Activated naive CD4-positive, alpha-beta T cell treated with anti-CD3 and anti-CD28 coated beads, Interleukin-2, amount 10 ng/mL, durations not matched to agents 7 days and 5 days (primary cell): ENCODE measurements at regions of chr1 and their contacts with region 1.

Region 1: DNA sequence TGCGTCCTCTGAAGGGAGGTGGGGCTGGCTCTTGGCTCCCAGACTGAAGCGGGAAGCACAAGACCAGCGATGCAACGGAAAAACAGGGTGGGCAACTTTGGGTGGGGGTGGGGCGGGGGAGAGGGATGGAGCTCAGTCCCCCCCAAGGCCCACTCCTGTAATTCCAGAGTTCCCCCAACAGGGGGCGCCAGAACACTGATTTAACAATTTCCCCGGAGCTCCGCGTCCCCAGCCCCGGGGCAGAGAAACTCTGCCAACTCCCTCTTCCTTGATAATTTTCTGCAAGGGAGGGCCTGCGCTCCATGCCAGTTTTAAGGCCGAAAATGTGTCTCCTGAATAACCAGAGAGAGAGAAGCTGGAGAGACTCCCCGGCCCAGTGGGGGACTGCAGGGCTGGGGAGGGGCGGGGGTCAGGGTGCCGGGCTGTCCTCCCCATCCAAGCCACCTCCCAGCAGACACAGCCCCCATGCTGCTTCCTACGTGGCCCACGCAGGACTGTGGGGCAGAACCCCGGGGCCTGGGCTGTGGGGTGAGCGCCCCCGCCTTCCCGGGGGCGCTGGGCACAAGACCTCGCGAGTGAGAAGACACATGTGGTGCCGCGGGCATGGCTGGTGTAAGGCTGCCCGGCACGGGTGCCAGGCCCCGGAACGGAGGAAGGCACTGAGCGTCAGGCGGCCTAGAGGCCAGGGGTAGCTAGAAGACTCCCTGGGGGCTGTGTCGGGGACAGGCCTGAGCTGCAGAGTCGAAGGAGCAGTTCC is 51.4 kb downstream of the KIF21B start:
- DNase-seq: peak; percentile 70
- H3K4me3 Mint-ChIP-seq: no peak overlapping the region
- H3K27ac Mint-ChIP-seq: no peak overlapping the region
- H3K4me1 Mint-ChIP-seq: no peaks in the 10 kb centered on the region
- H3K27me3 Mint-ChIP-seq: no peaks in the 10 kb centered on the region

Region 2: GRCh38 chr1:200767321-200767720 is 204.8 kb before region 1 on chr1:
- CTCF ChIA-PET with region 1: no interaction called
- DNase-seq: no peak
- H3K4me3 Mint-ChIP-seq: no peak overlapping the region
- H3K27ac Mint-ChIP-seq: no peak overlapping the region
- H3K4me1 Mint-ChIP-seq: no peaks in the 10 kb centered on the region
- H3K27me3 Mint-ChIP-seq: no peaks in the 10 kb centered on the region

Region 3: GRCh38 chr1:200992382-200993048 is 20.4 kb after region 1 on chr1:
- CTCF ChIA-PET with region 1: interaction called, 14 read pairs
- DNase-seq: no peak
- H3K4me3 Mint-ChIP-seq: no peak overlapping the region
- H3K27ac Mint-ChIP-seq: no peak overlapping the region
- H3K4me1 Mint-ChIP-seq: no peaks in the 10 kb centered on the region
- H3K27me3 Mint-ChIP-seq: no peaks in the 10 kb centered on the region

Region 4: GRCh38 chr1:201023517-201023902 is 51.4 kb after region 1 on chr1 and contains the start of gene KIF21B:
- CTCF ChIA-PET with region 1: interaction called, 21 read pairs
- DNase-seq: peak; percentile 94
- H3K4me3 Mint-ChIP-seq: peak within 1 kb of the TSS; percentile 89
- H3K27ac Mint-ChIP-seq: peak within 1 kb of the TSS; percentile 100
- H3K4me1 Mint-ChIP-seq: peaks cover 75% of the 10 kb centered on the region
- H3K27me3 Mint-ChIP-seq: peaks cover 3% of the 10 kb centered on the region

Region 5: DNA sequence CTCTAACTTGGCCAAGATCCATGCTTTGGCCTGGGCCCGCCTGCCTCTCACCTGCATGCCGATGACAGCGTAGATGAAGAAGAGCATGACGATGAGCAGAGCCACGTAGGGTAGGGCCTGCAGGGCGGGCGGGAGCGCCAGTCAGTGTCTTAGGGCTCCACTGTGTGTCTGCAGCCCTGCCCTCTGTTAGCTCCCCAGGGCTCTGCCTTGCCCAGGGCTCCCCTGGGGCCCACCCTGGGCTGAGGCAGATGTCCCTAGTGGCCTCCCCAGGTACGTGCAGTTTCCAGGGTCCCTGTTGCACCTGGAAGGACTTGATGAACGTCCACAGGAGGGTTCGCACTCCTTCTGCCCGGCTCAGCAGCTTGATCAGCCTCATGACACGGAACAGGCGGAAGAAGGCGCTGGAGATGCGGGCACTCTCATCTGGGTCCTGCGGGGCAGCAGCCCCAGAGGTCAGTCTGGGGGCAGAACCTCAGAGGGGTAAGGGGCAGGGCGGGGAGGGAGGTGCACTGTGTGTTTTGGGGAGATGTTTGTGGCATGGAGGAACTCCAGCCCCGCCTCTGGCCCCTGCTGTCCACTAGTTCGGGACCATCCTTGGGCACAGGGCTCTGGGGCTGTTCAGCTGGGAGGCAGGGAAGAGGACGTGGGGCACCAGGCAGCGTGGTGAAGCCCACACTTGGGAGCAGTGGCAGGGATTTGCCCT is 81.2 kb after region 1 on chr1:
- CTCF ChIA-PET with region 1: interaction called, 25 read pairs
- DNase-seq: no peak
- H3K4me3 Mint-ChIP-seq: no peak overlapping the region
- H3K27ac Mint-ChIP-seq: no peak overlapping the region
- H3K4me1 Mint-ChIP-seq: peaks cover 11% of the 10 kb centered on the region
- H3K27me3 Mint-ChIP-seq: peaks cover 44% of the 10 kb centered on the region

Region 6: DNA sequence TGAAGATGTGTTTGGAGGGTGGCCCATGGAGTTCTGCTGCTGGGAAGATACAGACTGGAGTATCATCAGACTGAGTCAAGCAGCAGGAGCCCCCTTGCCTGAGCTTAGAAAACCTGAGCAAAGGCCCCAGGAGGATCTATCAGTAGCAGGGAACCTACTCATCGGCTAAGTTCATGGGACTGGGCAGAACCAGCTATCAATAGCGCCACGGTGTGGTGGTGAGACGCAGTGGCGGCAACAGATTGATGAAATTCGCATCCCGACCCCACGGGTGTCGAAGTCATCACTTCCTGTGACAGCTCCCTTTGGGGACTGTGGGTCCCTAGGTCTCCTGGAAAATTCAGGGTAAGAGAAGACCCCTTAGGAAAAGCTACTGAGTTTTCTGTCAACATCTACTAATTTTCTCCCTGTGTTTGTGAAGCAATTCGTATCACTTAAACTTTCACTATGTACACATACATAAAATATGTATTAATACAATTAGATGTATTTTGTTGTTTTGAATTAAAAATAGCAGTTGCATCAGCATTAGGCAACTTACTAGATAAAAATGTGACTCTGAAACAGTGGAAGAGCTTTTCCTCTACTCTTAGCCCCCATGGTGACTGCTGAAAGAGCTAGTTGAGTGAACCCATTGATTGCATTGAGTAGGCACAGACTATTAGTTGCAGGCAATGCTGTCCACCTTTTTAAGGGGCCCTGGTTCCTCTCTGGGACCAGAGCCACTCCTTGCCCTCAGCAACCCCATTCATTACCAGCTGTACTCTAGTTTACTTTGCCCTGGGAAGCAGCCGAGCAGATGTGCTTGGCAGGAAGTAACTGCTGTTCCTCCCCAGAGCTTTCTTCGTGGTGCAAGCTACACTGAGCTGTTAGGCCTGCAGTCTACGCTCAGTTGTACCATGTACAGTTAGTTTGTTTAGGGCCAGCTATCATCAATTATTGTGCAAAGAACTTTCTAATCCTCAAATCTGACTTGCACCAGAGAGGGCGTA is 147.4 kb after region 1 on chr1:
- CTCF ChIA-PET with region 1: interaction called, 40 read pairs
- DNase-seq: peak; percentile 69
- H3K4me3 Mint-ChIP-seq: no peak overlapping the region
- H3K27ac Mint-ChIP-seq: no peak overlapping the region
- H3K4me1 Mint-ChIP-seq: peaks cover 6% of the 10 kb centered on the region
- H3K27me3 Mint-ChIP-seq: peaks cover 83% of the 10 kb centered on the region